ENCODE measurements at regions of chr15 and their contacts with region 1.

Region 1: GRCh38 chr15:92603743-92604470 is 51.7 kb downstream of the FAM174B start:
- DNase-seq: no peak
- H3K4me3 ChIP-seq: no peak overlapping the region
- H3K27ac ChIP-seq: peak overlapping the region in 2 of 3 donors; percentile 86 to 96
- H3K4me1 ChIP-seq: peaks cover 28 to 36% of the 10 kb centered on the region in 2 donors
- H3K27me3 ChIP-seq: no peaks in the 10 kb centered on the region
- CTCF ChIP-seq: no peak
- POLR2A ChIP-seq: no peak

Region 2: GRCh38 chr15:92533298-92533697 is 70.6 kb before region 1 on chr15:
- intact Hi-C with region 1: loop called (anchors 5 kb)
- DNase-seq: no peak
- H3K4me3 ChIP-seq: no peak overlapping the region
- H3K27ac ChIP-seq: no peak overlapping the region
- H3K4me1 ChIP-seq: peaks cover 12 to 13% of the 10 kb centered on the region in 2 donors
- H3K27me3 ChIP-seq: no peaks in the 10 kb centered on the region
- CTCF ChIP-seq: no peak
- POLR2A ChIP-seq: no peak